IMR-90 (cell line): ENCODE measurements at regions of chr10 and their contacts with region 1.

Region 1: GRCh38 chr10:4767033-4767814 is 58.8 kb upstream of the AKR1E2 start:
- DNase-seq: peak; percentile 66
- ATAC-seq: no peak
- H3K4me3 ChIP-seq: no peak overlapping the region
- H3K27ac ChIP-seq: peak overlapping the region; percentile 57
- H3K4me1 ChIP-seq: peaks cover 22% of the 10 kb centered on the region
- H3K27me3 ChIP-seq: no peaks in the 10 kb centered on the region
- CTCF ChIP-seq: peak; percentile 76
- POLR2A ChIP-seq: no peak
- RAD21 ChIP-seq: peak; percentile 83

Region 2: GRCh38 chr10:3077975-3078921 is 1689.0 kb before region 1 on chr10:
- CTCF ChIA-PET with region 1: no interaction called
- POLR2A ChIA-PET with region 1: no interaction called
- dilution Hi-C with region 1: no loop called
- in situ Hi-C with region 1: no loop called
- intact Hi-C with region 1: no loop called
- DNase-seq: no peak
- ATAC-seq: no peak
- H3K4me3 ChIP-seq: no peak overlapping the region
- H3K27ac ChIP-seq: no peak overlapping the region
- H3K4me1 ChIP-seq: peaks cover 8% of the 10 kb centered on the region; the same call in 1 of the 2 replicates
- H3K27me3 ChIP-seq: no peaks in the 10 kb centered on the region
- CTCF ChIP-seq: no peak
- POLR2A ChIP-seq: no peak
- RAD21 ChIP-seq: no peak

Region 3: DNA sequence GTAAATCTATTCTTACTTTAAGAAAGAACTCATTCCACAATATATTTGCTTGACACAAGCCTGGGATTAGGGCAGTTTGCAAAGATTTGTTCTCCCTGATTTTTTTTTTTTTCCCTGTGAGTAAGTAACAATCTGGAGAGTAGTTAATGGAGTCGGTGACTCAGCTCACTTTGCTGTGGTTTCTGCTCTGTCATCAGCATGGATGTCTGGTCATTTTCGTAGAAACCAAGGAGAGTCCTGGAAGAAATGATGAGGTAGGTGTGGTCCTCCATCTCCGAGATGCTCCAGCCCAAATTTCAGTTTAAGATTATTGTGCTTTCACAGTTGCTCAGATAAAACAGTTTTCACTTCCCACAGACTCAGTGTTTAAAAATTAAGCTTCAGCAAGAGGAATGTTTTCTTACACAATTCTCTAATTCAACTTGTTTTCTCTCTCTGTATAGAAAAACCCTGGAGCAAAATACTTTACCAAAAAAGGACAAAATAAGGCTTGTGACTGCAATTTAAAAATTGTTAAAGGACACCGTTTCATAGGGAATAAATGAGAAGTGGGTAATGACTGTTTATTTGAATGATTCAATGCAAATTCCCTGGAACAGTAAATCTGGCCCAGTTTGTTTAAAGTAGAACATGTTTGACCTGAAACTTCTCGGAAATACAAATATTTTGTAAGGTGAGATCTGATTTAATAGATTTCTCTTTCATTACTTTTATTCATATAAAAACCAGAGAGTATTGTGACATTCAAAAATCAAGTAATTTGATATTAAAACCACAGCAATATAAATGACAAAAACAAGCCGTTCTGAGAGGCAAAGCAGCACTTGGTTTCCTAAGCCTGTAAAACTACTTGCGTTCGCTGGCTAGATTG is 1518.1 kb before region 1 on chr10:
- CTCF ChIA-PET with region 1: no interaction called
- POLR2A ChIA-PET with region 1: no interaction called
- dilution Hi-C with region 1: no loop called
- in situ Hi-C with region 1: loop called (anchors 10 kb)
- intact Hi-C with region 1: no loop called
- DNase-seq: peak; percentile 94
- ATAC-seq: peak; percentile 95
- H3K4me3 ChIP-seq: peak overlapping the region; percentile 11; the same call in 1 of the 2 replicates
- H3K27ac ChIP-seq: peak overlapping the region; percentile 89
- H3K4me1 ChIP-seq: peaks cover 4% of the 10 kb centered on the region
- H3K27me3 ChIP-seq: no peaks in the 10 kb centered on the region
- CTCF ChIP-seq: no peak
- POLR2A ChIP-seq: no peak
- RAD21 ChIP-seq: no peak; the same call in 1 of the 2 replicates

Region 4: GRCh38 chr10:3902054-3902808 is 865.0 kb before region 1 on chr10:
- CTCF ChIA-PET with region 1: no interaction called
- POLR2A ChIA-PET with region 1: no interaction called
- dilution Hi-C with region 1: no loop called
- in situ Hi-C with region 1: loop called (anchors 25 kb)
- intact Hi-C with region 1: no loop called
- DNase-seq: no peak
- ATAC-seq: no peak
- H3K4me3 ChIP-seq: no peak overlapping the region
- H3K27ac ChIP-seq: peak overlapping the region; percentile 6; the same call in 1 of the 2 replicates
- H3K4me1 ChIP-seq: peaks cover 10% of the 10 kb centered on the region
- H3K27me3 ChIP-seq: no peaks in the 10 kb centered on the region
- CTCF ChIP-seq: no peak
- POLR2A ChIP-seq: no peak
- RAD21 ChIP-seq: no peak

Region 5: GRCh38 chr10:4344511-4344994 is 422.7 kb before region 1 on chr10:
- CTCF ChIA-PET with region 1: no interaction called
- POLR2A ChIA-PET with region 1: no interaction called
- dilution Hi-C with region 1: no loop called
- in situ Hi-C with region 1: no loop called
- intact Hi-C with region 1: loop called (anchors 2 kb)
- DNase-seq: peak; percentile 100
- ATAC-seq: peak; percentile 99
- H3K4me3 ChIP-seq: no peak overlapping the region
- H3K27ac ChIP-seq: peak overlapping the region; percentile 82
- H3K4me1 ChIP-seq: peaks cover 9% of the 10 kb centered on the region
- H3K27me3 ChIP-seq: no peaks in the 10 kb centered on the region
- CTCF ChIP-seq: peak; percentile 30; the same call in 1 of the 2 replicates
- POLR2A ChIP-seq: peak; percentile 13; the same call in 1 of the 2 replicates
- RAD21 ChIP-seq: peak; percentile 53

Region 6: DNA sequence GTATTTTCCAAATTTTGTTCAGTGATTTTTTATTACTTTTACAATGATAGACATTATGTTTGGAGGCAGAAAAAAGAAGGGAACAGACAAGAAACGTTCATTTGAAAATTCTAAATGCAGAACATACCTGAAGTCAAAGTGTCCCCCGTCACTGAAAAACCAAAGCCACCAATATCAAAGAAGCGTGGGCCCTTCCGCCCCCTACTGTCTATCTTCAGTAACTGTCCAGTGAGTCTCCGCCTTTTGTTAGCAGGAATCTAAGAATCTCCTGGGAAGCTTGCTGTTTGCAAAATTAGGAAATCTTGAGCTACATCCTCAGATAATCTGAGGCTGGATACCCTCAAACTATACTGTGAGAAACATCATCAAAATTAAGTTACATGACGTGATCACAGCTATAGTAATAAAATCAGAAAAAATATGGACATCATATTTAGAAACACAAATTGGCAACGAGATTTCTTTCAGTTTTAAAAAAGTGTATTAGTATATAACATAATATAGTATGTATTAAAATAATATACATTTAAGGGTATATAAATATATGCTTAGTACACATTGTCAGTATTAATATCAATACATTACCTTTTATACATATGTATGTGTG is 110.5 kb before region 1 on chr10:
- CTCF ChIA-PET with region 1: interaction called, 15 read pairs
- POLR2A ChIA-PET with region 1: no interaction called
- dilution Hi-C with region 1: no loop called
- in situ Hi-C with region 1: no loop called
- intact Hi-C with region 1: no loop called
- DNase-seq: peak; percentile 67
- ATAC-seq: peak; percentile 72
- H3K4me3 ChIP-seq: no peak overlapping the region
- H3K27ac ChIP-seq: no peak overlapping the region
- H3K4me1 ChIP-seq: peaks cover 2% of the 10 kb centered on the region
- H3K27me3 ChIP-seq: no peaks in the 10 kb centered on the region
- CTCF ChIP-seq: peak; percentile 82
- POLR2A ChIP-seq: peak; percentile 45; the same call in 1 of the 2 replicates
- RAD21 ChIP-seq: peak; percentile 96